ENCODE measurements at regions of chr13 and their contacts with region 1.

Region 1: GRCh38 chr13:93227878-93228642 is 1.5 kb downstream of the GPC6 start:
- DNase-seq: peak; percentile 92
- H3K4me3 Mint-ChIP-seq: peak overlapping the region; percentile 93
- H3K27ac Mint-ChIP-seq: peak overlapping the region; percentile 86
- H3K4me1 Mint-ChIP-seq: peaks cover 46% of the 10 kb centered on the region
- H3K27me3 Mint-ChIP-seq: no peaks in the 10 kb centered on the region
- CTCF ChIP-seq: peak; percentile 61

Region 2: DNA sequence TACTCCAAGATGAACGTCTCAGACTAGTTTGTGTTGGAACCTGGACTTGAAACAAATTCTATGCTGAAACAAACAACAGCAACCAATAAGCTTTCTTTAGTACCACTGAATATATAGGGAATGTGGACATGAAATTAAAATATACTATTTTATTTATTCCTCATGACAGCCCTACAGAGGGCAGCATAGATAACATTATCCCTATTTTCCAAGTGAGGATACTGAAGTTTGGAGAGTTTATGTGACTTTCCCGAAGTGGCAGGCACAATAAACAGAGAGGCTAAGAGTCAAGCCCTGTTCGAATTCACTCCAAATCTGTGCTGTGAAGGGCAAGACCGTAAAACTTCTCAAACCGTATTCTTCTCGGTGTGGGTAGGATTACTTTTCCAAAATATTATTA is 511.3 kb before region 1 on chr13:
- CTCF ChIA-PET with region 1: interaction called, 5 read pairs
- POLR2A ChIA-PET with region 1: no interaction called
- intact Hi-C with region 1: loop called (anchors 5 kb)
- DNase-seq: peak; percentile 40
- H3K4me3 Mint-ChIP-seq: no peak overlapping the region
- H3K27ac Mint-ChIP-seq: no peak overlapping the region
- H3K4me1 Mint-ChIP-seq: no peaks in the 10 kb centered on the region
- H3K27me3 Mint-ChIP-seq: no peaks in the 10 kb centered on the region
- CTCF ChIP-seq: peak; percentile 38

Region 3: DNA sequence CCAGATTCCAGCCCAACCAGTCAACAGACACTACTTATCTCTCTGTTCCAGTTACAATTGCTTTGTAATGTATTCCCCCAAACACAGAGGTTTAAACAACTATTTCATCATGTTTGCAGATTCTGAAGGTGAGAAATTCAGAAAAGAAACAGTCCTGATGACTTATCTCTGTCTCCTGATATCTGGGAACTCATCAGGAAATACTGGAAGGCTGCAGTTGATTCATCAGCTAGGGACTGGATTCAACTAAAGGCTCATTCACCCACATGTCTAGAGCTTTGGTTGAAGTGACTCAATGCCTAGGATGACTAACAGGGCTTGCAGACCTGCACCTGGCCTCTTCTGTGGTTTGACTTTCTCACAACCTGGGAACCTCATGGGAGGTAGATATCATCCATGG is 58.1 kb before region 1 on chr13:
- CTCF ChIA-PET with region 1: no interaction called
- POLR2A ChIA-PET with region 1: interaction called, 6 read pairs
- intact Hi-C with region 1: loop called (anchors 2 kb)
- DNase-seq: peak; percentile 93
- H3K4me3 Mint-ChIP-seq: no peak overlapping the region
- H3K27ac Mint-ChIP-seq: peak overlapping the region; percentile 44
- H3K4me1 Mint-ChIP-seq: peaks cover 15% of the 10 kb centered on the region
- H3K27me3 Mint-ChIP-seq: no peaks in the 10 kb centered on the region
- CTCF ChIP-seq: no peak

Region 4: GRCh38 chr13:93559718-93560117 is 331.7 kb after region 1 on chr13:
- CTCF ChIA-PET with region 1: no interaction called
- POLR2A ChIA-PET with region 1: no interaction called
- intact Hi-C with region 1: loop called (anchors 5 kb)
- DNase-seq: peak; percentile 95
- H3K4me3 Mint-ChIP-seq: peak overlapping the region; percentile 19
- H3K27ac Mint-ChIP-seq: peak overlapping the region; percentile 87
- H3K4me1 Mint-ChIP-seq: peaks cover 15% of the 10 kb centered on the region
- H3K27me3 Mint-ChIP-seq: no peaks in the 10 kb centered on the region
- CTCF ChIP-seq: no peak

Region 5: DNA sequence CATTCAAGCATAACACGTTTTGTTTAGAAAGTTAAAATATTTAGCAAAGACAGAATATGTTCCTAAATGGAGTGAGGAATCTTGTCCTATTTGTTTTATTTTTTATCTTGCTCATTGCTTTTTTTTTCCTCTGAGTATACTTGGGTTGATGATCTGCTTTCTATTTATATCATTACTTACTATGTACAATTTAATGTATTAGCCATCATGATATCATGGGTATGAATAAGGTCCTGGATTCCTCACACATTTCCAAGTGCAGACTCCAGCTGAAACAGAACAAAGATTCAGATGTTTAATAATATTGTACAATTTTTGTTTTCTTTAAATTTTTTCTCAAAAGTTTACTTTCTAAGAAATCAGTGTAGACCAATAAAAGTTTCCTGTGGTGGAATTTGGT is 386.7 kb after region 1 on chr13:
- CTCF ChIA-PET with region 1: no interaction called
- POLR2A ChIA-PET with region 1: no interaction called
- intact Hi-C with region 1: no loop called
- DNase-seq: no peak
- H3K4me3 Mint-ChIP-seq: no peak overlapping the region
- H3K27ac Mint-ChIP-seq: no peak overlapping the region
- H3K4me1 Mint-ChIP-seq: no peaks in the 10 kb centered on the region
- H3K27me3 Mint-ChIP-seq: no peaks in the 10 kb centered on the region
- CTCF ChIP-seq: no peak

Region 6: DNA sequence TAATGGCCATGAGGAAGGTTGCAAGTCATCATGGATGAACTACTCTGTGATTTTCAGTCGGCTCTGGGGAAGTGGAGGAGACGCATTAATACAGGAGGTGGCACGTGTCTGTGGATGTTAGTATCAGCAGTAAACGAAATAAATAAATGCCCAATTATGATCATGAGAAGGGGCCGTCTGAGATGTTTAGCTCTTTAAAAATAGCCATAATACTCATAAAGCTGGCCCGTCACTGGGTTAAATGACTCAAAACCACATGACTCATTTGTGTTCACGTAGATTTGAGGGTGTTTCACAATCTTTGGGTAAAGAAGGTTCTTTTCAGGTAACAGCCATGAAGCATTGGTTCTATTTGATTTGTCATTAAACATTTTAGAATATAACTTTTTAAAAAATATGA is 619.1 kb after region 1 on chr13:
- CTCF ChIA-PET with region 1: interaction called, 3 read pairs
- POLR2A ChIA-PET with region 1: interaction called, 3 read pairs
- intact Hi-C with region 1: loop called (anchors 5 kb)
- DNase-seq: peak; percentile 90
- H3K4me3 Mint-ChIP-seq: peak overlapping the region; percentile 20
- H3K27ac Mint-ChIP-seq: peak overlapping the region; percentile 91
- H3K4me1 Mint-ChIP-seq: peaks cover 13% of the 10 kb centered on the region
- H3K27me3 Mint-ChIP-seq: no peaks in the 10 kb centered on the region
- CTCF ChIP-seq: no peak

Region 7: DNA sequence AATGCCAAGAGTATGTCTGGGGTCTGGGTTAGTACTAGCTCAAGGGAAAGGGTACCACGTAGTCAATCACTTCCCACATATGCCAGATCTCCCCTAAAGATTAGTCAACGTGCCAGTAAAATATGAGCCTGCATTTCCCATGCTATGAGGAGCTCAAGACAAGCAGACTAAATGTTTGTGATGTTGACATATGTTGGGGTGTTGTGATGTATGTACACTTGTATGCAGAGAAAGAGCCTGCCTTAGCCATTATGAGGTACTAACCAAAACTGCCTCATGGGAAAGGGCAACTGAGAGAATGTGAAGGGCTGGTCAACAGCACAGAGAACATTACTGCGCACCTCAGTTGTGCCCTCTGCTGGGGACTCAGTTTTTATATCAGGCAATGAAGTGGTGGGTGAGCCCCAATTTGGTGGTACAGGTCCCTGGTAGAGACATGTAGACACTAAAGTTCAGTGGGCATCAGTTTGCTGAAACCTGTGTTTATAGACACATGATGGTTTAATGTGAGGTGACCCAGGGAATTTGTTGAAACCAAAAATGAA is 964.4 kb after region 1 on chr13:
- CTCF ChIA-PET with region 1: interaction called, 4 read pairs
- POLR2A ChIA-PET with region 1: interaction called, 3 read pairs
- intact Hi-C with region 1: loop called (anchors 1 kb)
- DNase-seq: peak; percentile 50
- H3K4me3 Mint-ChIP-seq: no peak overlapping the region
- H3K27ac Mint-ChIP-seq: peak overlapping the region; percentile 47
- H3K4me1 Mint-ChIP-seq: peaks cover 20% of the 10 kb centered on the region
- H3K27me3 Mint-ChIP-seq: no peaks in the 10 kb centered on the region
- CTCF ChIP-seq: peak; percentile 47